GM12878 (cell line): ENCODE measurements at regions of chr1 and their contacts with region 1.

Region 1: DNA sequence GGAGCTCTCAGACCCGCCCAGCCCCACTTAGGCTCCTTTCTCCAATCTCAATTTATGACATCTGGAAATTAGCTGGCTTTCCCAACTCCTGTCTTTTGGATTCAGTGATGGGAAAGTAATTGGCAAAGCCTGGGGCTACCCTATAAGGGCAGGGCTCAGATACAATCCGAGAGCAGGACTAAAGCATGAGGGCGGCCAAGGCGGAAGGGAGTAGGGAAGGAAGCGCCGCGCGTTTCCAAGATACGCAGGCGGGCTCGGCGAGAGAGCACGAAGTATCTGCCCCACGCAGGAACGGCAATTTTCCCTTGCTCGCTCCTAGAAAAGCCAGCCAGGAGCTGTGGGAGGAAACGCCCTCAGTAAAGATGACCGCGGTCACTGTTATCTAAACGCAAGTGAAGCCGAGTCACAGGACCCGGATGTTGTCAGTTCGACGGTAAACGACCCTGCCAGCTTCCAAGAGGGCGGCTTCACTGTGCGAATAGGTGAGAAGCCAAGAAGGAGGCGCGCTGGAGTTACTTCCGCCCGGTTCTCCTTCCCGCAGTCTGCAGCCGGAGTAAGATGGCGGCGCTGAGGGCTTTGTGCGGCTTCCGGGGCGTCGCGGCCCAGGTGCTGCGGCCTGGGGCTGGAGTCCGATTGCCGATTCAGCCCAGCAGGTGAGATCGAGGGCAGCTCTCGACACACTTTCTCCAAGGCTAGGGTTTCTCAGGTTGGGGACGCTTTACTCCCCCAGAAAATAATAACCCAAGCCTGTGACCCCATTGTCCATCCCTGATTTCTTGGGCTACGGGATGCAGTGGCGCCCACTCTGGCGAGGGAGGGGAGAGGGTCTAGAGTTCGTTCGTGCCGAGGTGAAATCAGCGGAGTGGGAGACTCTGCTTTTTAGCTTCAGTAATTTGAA is at the start of gene NDUFS2:
- DNase-seq: peak; percentile 94
- ATAC-seq: peak; percentile 99
- H3K4me3 ChIP-seq: peak within 1 kb of the TSS; percentile 95
- H3K27ac ChIP-seq: peak within 1 kb of the TSS; percentile 86
- H3K4me1 ChIP-seq: peaks cover 21% of the 10 kb centered on the region
- H3K27me3 ChIP-seq: no peaks in the 10 kb centered on the region
- CTCF ChIP-seq: peak in 1 of 3 experiments; percentile 5; a peak in 2 of 6 replicates
- EP300 ChIP-seq: no peak
- POLR2A ChIP-seq: peak; percentile 96
- RAD21 ChIP-seq: no peak
- polyA plus RNA-seq, gene NDUFS2: 66.5 to 93.9 TPM

Region 2: GRCh38 chr1:161216945-161217712 is 15.1 kb after region 1 on chr1:
- CTCF ChIA-PET with region 1: interaction called, 385 read pairs
- POLR2A ChIA-PET with region 1: interaction called, 24 read pairs
- RAD21 ChIA-PET with region 1: interaction called, 3 read pairs
- SMC1A ChIA-PET with region 1: interaction called, 15 read pairs
- in situ Hi-C with region 1: no loop called
- intact Hi-C with region 1: no loop called
- DNase-seq: peak; percentile 92
- ATAC-seq: peak; percentile 95
- H3K4me3 ChIP-seq: peak overlapping the region; percentile 8; the same call in 1 of the 2 replicates
- H3K27ac ChIP-seq: peak overlapping the region; percentile 24
- H3K4me1 ChIP-seq: peaks cover 21% of the 10 kb centered on the region
- H3K27me3 ChIP-seq: no peaks in the 10 kb centered on the region
- CTCF ChIP-seq: no peak
- EP300 ChIP-seq: peak; percentile 11 to 73; a peak in 1 of 4 replicates
- POLR2A ChIP-seq: no peak
- RAD21 ChIP-seq: no peak

Region 3: GRCh38 chr1:161367684-161368400 is 165.8 kb after region 1 on chr1 and contains the start of gene CFAP126:
- CTCF ChIA-PET with region 1: interaction called, 9 read pairs
- POLR2A ChIA-PET with region 1: interaction called, 4 read pairs
- RAD21 ChIA-PET with region 1: interaction called, 5 read pairs
- SMC1A ChIA-PET with region 1: interaction called, 13 read pairs
- in situ Hi-C with region 1: no loop called
- intact Hi-C with region 1: no loop called
- DNase-seq: peak; percentile 35
- ATAC-seq: peak; percentile 100
- H3K4me3 ChIP-seq: no peak within 1 kb of the TSS
- H3K27ac ChIP-seq: no peak within 1 kb of the TSS; the same call in 1 of the 2 replicates
- H3K4me1 ChIP-seq: no peaks in the 10 kb centered on the region; the same call in 1 of the 2 replicates
- H3K27me3 ChIP-seq: no peaks in the 10 kb centered on the region
- CTCF ChIP-seq: peak in 2 of 3 experiments; percentile 19 to 49; a peak in 2 of 6 replicates
- EP300 ChIP-seq: no peak
- POLR2A ChIP-seq: no peak
- RAD21 ChIP-seq: peak; percentile 48
- polyA plus RNA-seq, gene CFAP126: not detected